Activated B cell treated with CpG ODN at 0.5 μM for 24 hours (primary cell): ENCODE measurements at regions of chr3 and their contacts with region 1.

Region 1: DNA sequence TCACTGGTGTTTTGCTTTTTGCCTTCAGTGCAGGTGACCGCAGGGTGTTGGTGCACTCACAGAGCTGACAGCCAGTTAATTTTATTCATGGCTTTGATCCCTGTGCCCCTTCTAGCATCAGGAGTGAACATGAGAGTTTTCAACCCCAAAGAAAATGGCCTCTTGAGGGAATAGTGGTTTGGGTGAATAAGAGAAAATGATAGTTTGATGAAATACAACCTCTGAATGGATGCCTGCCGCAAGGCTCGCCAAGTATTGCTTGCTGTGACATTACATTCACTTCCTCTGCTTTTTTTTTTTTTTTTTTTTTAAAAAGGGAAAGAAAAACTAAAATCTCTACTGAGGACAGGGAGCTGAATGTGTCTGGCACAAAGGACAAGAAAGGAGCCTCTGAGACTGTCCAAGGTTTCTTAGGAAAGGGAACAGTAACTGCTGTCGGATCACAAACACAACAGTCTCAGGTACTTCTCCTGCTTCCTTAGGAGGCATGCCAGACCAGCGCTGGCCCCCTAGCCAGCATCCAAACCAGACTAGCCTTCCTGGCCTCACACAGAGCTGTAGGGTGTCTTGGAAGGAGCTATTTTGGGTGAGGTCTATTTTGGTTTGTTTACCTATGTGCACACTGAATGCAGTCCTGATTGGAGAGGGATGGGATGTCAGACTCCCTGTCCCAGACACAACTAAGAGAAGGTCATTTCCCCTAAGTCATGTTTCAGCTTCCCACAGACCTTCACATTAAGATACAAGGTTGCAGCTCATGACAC is 29.0 kb downstream of the CCDC80 start:
- DNase-seq: no peak
- ATAC-seq: no peak
- H3K4me3 Mint-ChIP-seq: no peak overlapping the region
- H3K27ac Mint-ChIP-seq: no peak overlapping the region
- H3K4me1 Mint-ChIP-seq: no peaks in the 10 kb centered on the region
- H3K27me3 Mint-ChIP-seq: peaks cover 3% of the 10 kb centered on the region
- CTCF ChIP-seq: no peak

Region 2: GRCh38 chr3:111882799-111883198 is 729.1 kb before region 1 on chr3:
- CTCF ChIA-PET with region 1: no interaction called
- POLR2A ChIA-PET with region 1: no interaction called
- intact Hi-C with region 1: no loop called
- DNase-seq: no peak
- ATAC-seq: no peak
- H3K4me3 Mint-ChIP-seq: no peak overlapping the region
- H3K27ac Mint-ChIP-seq: no peak overlapping the region
- H3K4me1 Mint-ChIP-seq: peaks cover 3% of the 10 kb centered on the region
- H3K27me3 Mint-ChIP-seq: peaks cover 2% of the 10 kb centered on the region
- CTCF ChIP-seq: no peak

Region 3: DNA sequence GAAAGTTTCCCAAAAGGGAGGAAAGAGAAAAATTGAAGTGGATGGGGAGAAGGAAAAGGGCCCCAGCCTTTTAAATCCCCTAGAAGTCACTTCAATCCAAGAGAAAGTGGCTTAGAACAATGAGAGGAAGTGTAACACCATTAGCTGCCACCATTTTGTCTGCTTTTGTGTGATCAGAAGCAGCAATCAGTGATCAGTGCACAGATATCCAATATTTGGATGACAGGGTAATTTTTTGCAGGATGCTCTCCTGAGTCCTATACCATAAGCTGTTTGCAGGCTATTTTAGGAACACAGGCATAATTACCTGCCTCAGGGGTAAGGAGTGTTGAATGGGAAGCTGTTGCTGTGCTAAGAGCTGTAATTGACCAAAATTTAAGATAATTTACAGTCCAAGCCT is 18.7 kb before region 1 on chr3:
- CTCF ChIA-PET with region 1: no interaction called
- POLR2A ChIA-PET with region 1: interaction called, 11 read pairs
- intact Hi-C with region 1: no loop called
- DNase-seq: no peak
- ATAC-seq: no peak
- H3K4me3 Mint-ChIP-seq: no peak overlapping the region
- H3K27ac Mint-ChIP-seq: no peak overlapping the region
- H3K4me1 Mint-ChIP-seq: peaks cover 11% of the 10 kb centered on the region
- H3K27me3 Mint-ChIP-seq: no peaks in the 10 kb centered on the region
- CTCF ChIP-seq: no peak